HEK293 (cell line): ENCODE measurements at regions of chr9 and their contacts with region 1.

Region 1: GRCh38 chr9:114936581-114936980 is 6.2 kb upstream of the TNFSF8 start:
- H3K4me3 ChIP-seq: no peak overlapping the region
- H3K27ac ChIP-seq: no peak overlapping the region
- H3K4me1 ChIP-seq: no peaks in the 10 kb centered on the region
- CTCF ChIP-seq: no peak

Region 2: DNA sequence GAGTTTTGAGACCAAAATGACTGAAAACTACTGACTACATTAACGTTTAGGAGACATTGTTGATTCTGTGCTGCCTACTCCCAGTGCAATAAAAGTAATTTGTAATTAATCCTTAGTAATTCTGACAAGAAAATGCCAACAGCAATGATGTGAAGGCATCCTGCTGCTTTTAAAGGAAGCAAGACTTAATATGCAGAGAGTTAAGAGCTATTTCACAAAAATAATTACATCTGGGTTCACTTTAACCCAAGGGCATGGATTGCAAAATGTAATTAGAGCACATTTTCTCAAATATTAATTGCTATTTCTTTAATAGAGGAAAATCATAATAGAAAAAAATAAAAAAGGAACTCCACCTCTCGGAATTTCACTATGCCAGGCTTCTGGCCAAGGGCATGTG is 16.5 kb after region 1 on chr9:
- CTCF ChIA-PET with region 1: interaction called, 10 read pairs
- POLR2A ChIA-PET with region 1: interaction called, 3 read pairs
- H3K4me3 ChIP-seq: no peak overlapping the region
- H3K27ac ChIP-seq: no peak overlapping the region
- H3K4me1 ChIP-seq: no peaks in the 10 kb centered on the region
- CTCF ChIP-seq: no peak